ENCODE measurements at regions of chr3 and their contacts with region 1.

Region 1: GRCh38 chr3:70631716-70632307 is 319.4 kb upstream of the MDFIC2 start:
- DNase-seq: no peak
- H3K4me3 ChIP-seq: no peak overlapping the region
- CTCF ChIP-seq: no peak

Region 2: GRCh38 chr3:70597312-70597711 is 34.5 kb before region 1 on chr3:
- in situ Hi-C with region 1: loop called (anchors 5 kb)
- DNase-seq: no peak
- H3K4me3 ChIP-seq: no peak overlapping the region
- CTCF ChIP-seq: no peak